ENCODE measurements at regions of chr7 and their contacts with region 1.

Region 1: DNA sequence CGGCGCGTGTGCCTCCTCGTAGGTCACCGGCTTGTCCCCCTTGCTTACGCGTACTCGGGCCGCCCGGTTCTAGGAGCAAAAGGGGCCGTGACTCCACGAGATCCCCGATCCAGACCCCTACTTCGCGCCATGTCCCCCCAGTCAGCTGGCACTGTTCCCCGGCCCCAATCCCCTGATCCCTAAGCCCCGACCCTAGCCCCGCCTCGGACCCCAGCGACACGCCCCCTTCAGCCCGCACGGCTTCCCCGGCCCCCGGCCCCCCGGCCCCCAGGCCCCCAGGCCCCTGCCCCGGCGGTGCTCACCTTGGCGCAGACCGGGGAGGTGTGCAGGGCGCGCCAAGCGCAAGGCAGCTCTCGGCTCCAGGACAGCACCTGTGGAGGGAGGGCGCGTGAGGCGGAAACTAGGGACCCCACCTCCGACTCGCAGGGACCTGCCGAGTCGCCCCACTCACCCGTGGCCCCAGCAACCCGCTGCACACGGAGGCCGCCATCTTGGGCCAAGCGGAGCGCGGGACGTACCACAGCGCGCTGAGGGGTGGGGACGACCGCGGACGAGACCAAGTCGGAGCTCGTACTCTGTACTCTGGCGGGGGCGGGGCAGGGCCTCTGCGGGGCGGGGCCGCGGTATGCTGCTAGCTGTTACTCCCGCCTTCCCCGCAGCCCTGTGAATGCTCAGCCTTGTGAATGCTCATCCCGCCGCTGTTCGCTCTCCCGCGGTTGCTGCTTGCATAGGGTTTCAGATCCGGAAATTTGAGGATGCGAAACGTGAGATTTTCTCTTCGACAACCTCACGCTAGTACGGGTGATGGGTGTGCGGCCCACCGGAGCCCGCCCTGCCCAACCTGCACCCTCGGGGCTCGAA is at the start of gene MRPS24:
- DNase-seq: peak; percentile 88
- H3K4me3 Mint-ChIP-seq: peak within 1 kb of the TSS; percentile 85
- H3K27ac Mint-ChIP-seq: peak within 1 kb of the TSS; percentile 85
- H3K4me1 Mint-ChIP-seq: peaks cover 23% of the 10 kb centered on the region
- H3K27me3 Mint-ChIP-seq: no peaks in the 10 kb centered on the region
- total RNA-seq, gene MRPS24: 118 and 125 TPM in 2 replicates

Region 2: DNA sequence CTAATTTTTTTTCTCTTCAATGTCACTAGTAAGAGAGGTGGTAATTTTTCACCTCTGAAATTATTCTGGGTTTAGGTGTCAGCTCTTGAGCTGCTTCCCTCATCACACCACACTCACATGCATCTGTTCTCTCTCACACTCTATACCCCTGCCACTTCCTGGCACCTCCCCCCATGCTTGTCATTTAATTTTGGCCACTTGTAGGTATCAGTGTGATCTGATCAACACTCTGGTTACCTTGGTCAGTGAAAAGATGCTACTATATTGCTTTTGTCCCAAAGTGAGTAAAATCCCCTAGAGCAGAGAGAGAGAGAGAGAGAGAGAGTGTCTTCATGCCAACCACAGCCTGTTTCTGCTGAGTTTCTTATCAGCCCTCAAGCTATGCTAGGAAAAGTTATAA is 243.8 kb before region 1 on chr7:
- intact Hi-C with region 1: no loop called
- DNase-seq: no peak
- H3K4me3 Mint-ChIP-seq: peak overlapping the region; percentile 19
- H3K27ac Mint-ChIP-seq: peak overlapping the region; percentile 86
- H3K4me1 Mint-ChIP-seq: peaks cover 79% of the 10 kb centered on the region
- H3K27me3 Mint-ChIP-seq: no peaks in the 10 kb centered on the region

Region 3: GRCh38 chr7:43906331-43907010 is 37.2 kb after region 1 on chr7 and contains the start of gene URGCP:
- intact Hi-C with region 1: loop called (anchors 1 kb)
- DNase-seq: peak; percentile 46
- H3K4me3 Mint-ChIP-seq: peak within 1 kb of the TSS; percentile 95
- H3K27ac Mint-ChIP-seq: peak within 1 kb of the TSS; percentile 97
- H3K4me1 Mint-ChIP-seq: peaks cover 28% of the 10 kb centered on the region
- H3K27me3 Mint-ChIP-seq: peaks cover 2% of the 10 kb centered on the region
- total RNA-seq, gene URGCP: 32.2 and 34.4 TPM in 2 replicates